Panc1 (cell line): ENCODE measurements at regions of chr10 and their contacts with region 1.

Region 1: GRCh38 chr10:92712016-92712889 is 22.5 kb downstream of the HHEX start:
- DNase-seq: no peak
- ATAC-seq: no peak
- H3K4me3 ChIP-seq: no peak overlapping the region
- H3K27ac ChIP-seq: no peak overlapping the region
- H3K4me1 ChIP-seq: no peaks in the 10 kb centered on the region
- H3K27me3 ChIP-seq: no peaks in the 10 kb centered on the region; the same call in 1 of the 2 replicates
- CTCF ChIP-seq: no peak

Region 2: DNA sequence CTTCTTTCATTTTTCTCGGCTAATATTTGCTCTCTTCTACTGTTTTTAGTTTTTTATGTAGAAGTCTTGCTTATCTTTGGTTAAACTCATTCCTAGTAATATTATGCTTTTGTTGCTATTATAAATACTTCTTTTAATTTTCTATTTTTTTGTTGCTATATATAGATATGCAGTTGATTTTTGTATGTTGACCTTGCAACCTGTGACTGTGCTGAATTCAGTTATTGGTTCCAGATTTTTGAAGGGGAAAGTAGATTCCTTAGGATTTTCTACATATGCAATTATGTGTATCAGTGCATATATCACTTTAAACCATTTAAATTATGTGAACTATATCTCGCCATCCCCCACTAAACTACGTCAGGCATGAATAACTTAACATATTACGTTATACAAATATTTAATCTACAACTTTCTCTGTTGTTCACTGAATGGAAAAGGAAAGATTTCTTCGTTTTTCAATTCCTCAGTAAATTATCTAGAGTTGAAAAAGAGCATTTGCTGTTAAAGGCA is 209.9 kb before region 1 on chr10:
- CTCF ChIA-PET with region 1: interaction called, 12 read pairs
- POLR2A ChIA-PET with region 1: no interaction called
- in situ Hi-C with region 1: no loop called
- intact Hi-C with region 1: no loop called
- DNase-seq: no peak
- ATAC-seq: no peak
- H3K4me3 ChIP-seq: no peak overlapping the region
- H3K27ac ChIP-seq: no peak overlapping the region
- H3K4me1 ChIP-seq: no peaks in the 10 kb centered on the region
- H3K27me3 ChIP-seq: no peaks in the 10 kb centered on the region
- CTCF ChIP-seq: no peak